BJ (cell line): ENCODE measurements at regions of chr4 and their contacts with region 1.

Region 1: DNA sequence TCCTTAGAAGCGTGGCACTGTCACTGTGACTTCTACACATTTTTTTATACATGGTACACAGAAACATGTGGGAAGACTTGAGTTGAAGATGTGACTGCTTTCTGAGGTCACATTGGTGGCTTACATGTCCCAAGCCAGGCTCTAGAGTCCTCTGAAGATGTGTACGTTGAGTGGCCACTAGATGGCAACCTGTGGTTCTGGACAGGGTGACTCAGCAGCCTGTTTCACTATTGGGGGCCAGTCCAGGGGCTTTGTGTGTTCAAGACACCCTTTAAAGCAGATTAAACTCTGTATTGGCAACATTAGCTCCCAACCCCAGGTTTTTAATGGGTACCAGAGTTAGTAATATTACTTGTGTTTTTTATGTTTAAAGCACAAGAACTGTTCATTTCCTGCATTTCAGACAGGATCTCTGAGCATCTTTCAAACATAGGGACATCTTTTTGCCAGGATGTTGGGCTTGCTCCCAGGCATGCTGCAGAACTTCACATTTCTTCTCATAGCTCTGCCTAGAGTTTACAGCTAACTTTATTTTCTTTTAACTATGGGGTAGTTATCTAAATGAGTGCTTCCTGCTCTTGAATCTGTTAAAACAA is 53.0 kb downstream of the DCUN1D4 start:
- DNase-seq: peak; percentile 13
- H3K4me3 ChIP-seq: no peak overlapping the region
- H3K27me3 ChIP-seq: no peaks in the 10 kb centered on the region
- CTCF ChIP-seq: peak; percentile 90

Region 2: DNA sequence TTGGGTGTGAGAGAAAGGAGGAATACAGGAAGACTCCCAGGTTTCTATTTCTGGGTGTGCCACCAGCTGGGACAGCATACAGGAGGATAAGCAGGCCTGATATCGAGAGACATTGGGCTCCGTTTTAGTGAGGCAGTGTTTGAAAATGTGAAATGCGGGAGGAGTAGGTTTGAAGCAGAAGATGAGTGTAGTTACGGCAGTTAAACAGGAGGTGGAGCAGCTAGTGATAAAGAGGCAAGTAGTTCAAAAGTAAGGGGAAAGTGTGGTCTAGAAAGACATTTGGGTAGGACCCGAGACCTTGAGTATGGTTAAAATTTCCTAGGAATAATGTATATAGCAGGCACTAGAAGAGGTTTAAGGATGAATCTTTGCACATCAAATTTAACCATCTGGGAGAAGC is 10.5 kb before region 1 on chr4:
- CTCF ChIA-PET with region 1: interaction called, 20 read pairs
- POLR2A ChIA-PET with region 1: no interaction called
- DNase-seq: no peak
- H3K4me3 ChIP-seq: no peak overlapping the region
- H3K27me3 ChIP-seq: no peaks in the 10 kb centered on the region
- CTCF ChIP-seq: peak; percentile 47

Region 3: DNA sequence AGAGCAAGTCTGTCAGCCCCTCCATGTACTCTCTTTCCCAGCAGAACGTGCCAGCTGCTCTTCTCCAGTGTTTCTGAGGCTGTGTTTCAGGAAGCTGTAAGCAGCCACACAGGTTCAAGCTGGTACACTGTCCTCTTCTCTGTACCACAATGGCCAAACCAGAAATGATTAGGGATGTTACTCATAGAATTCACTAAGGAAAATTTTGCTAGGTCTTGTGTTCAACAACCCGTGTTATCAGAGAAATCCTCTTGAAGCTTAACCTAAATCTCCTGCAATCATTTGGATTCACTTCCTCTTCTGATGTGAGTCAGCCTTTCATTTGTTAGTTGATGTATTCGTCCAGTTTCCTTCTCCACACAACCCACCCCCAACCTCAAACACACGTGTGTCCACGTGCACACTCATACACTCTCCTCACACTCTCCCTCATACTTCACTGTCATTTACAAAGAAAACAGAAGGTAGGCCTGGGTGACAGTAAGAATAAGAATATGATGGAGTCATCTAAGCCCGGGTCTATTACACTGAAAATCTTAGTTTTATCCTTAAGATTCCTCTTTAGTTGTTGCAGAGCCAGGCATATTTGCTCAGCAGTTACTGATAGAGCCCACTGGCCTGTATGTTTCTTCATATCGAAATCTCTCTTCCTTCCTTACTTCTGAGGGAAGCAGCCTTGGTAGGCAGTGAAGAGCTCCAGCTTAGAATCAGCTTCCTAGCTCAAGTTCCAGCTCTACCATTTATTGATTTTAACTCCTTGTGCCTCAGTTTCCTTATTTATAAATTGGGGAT is 10.5 kb after region 1 on chr4:
- CTCF ChIA-PET with region 1: interaction called, 12 read pairs
- POLR2A ChIA-PET with region 1: no interaction called
- DNase-seq: no peak
- H3K4me3 ChIP-seq: no peak overlapping the region
- H3K27me3 ChIP-seq: no peaks in the 10 kb centered on the region
- CTCF ChIP-seq: no peak

Region 4: GRCh38 chr4:51965862-51966261 is 70.0 kb after region 1 on chr4:
- CTCF ChIA-PET with region 1: no interaction called
- POLR2A ChIA-PET with region 1: no interaction called
- DNase-seq: no peak
- H3K4me3 ChIP-seq: no peak overlapping the region
- H3K27me3 ChIP-seq: no peaks in the 10 kb centered on the region; the same call in 1 of the 2 replicates
- CTCF ChIP-seq: no peak

Region 5: DNA sequence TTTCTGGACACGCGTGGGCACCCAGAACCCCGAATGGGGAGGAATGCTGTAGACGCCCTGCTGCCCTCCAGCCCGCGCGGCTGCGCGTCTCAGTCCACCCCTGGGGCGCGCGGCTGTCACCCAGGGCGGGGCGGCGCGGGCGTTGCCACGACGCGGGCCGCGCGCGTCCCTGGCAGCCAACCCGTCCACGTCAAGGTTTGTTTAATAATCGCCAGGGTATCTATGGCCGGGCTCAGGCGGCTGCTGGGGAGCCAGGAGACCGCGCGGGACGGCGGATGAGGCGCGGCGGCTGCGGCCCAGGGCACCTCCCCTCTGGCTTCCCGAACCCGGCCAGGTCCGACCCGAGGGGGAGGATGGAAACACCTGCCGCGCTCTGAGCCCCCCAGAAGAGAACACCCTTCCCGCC is 155.3 kb after region 1 on chr4 and contains the start of gene SPATA18:
- CTCF ChIA-PET with region 1: no interaction called
- POLR2A ChIA-PET with region 1: no interaction called
- DNase-seq: no peak
- H3K4me3 ChIP-seq: peak within 1 kb of the TSS; percentile 76
- H3K27me3 ChIP-seq: peaks cover 1% of the 10 kb centered on the region; the same call in 1 of the 2 replicates
- CTCF ChIP-seq: no peak
- polyA plus RNA-seq, gene SPATA18: 10.6 and 13.4 TPM in 2 replicates

Region 6: DNA sequence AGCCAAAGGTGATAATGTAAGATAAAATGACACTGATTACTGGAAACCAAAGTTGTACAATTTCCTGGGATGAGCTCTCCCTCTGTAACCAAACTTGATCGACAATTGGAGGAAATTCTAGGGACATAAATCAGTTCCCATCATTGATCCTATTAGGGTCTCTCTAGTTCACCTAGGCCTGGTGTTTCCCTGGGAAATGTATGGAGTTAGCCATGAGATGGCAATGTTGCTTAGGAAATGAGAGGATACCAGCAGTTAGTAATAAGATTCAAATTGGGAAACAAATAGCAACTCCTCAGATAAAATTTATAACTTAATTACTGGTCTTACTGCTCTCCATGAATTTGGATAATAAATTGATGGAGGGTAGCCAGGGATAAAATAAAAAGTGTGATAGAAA is 207.4 kb after region 1 on chr4:
- CTCF ChIA-PET with region 1: no interaction called
- POLR2A ChIA-PET with region 1: no interaction called
- DNase-seq: no peak
- H3K4me3 ChIP-seq: no peak overlapping the region
- H3K27me3 ChIP-seq: no peaks in the 10 kb centered on the region; the same call in 1 of the 2 replicates
- CTCF ChIP-seq: peak; percentile 37